Right ventricle myocardium inferior (tissue), 1 donor: ENCODE measurements at regions of chr4 and their contacts with region 1.

Region 1: DNA sequence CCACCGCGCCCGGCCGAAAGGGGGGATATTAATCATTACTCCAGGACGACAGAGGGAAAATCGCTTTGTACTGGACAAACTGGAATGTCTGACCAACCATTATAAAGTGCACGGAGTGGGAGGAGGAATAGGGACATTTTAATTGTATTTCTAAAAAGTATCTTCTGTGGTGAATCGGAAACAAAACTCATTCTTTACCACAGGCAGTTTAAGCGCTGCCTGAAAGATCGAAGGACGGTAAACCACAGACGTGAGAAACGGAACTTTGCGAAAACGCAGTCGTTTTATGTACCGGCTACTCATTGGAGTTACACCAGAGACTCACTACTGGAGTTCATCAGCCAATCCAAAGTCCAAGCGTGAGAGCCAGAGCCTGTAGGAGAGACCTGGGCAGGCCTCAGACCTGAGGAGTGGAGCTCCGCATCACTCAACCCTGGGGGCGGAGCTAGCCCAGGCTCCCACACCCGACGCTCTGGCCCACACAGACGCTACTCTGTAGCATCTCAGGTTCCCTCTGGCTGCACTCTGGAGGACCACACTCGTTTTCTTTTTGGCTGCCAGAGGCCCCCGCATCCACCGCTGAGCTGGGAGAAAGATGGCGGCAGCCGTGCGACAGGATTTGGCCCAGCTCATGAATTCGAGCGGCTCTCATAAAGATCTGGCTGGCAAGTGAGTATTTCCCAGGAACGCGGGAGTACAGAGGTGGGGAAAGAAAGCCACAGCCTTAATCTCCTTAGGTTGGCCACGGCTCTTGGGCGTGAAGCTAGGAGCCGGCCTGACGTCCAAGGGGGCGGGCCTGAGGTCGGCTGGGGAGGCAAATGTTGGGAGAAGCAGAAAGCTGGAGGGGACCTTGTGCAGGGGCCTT is at the start of gene COPS4:
- DNase-seq: peak; percentile 97
- ATAC-seq: peak; percentile 100
- total RNA-seq, gene COPS4: 50.4 TPM

Region 2: GRCh38 chr4:82614843-82615449 is 419.9 kb before region 1 on chr4:
- intact Hi-C with region 1: no loop called
- DNase-seq: no peak
- ATAC-seq: no peak

Region 3: GRCh38 chr4:82900331-82901128 is 134.3 kb before region 1 on chr4 and contains the start of gene THAP9:
- intact Hi-C with region 1: loop called (anchors 2 kb)
- DNase-seq: peak; percentile 99
- ATAC-seq: peak; percentile 98
- total RNA-seq, gene THAP9: 5.5 TPM

Region 4: DNA sequence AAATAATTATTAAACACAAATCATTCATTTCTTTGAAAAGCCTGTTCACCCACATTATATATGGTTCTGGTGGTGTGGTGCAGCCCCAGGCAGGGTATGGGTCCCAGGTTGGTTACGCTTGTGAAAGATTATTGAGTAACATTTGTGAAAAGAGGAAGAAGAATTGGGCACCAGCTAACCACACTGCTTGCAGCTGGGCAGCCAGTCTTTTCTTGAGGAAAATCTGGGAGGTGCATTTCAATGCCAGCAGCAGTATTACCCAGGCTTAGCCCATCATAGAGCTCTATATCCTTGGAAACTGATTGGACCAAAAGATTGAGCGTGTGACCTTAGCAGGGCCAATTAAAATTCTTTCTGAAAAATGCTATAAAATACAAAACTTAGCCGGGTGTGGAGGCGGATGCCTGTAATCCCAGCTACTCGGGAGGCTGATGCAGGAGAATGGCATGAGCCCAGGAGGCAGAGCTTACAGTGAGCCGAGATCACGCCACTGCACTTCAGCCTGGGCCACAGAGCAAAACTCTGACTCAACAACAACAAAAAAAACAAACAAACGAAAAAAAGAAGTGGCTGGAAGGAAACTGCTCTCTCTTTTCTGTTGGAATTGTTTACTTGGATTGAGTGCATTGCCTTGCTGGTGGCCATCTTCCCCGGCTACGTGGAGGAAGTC is 89.4 kb after region 1 on chr4:
- intact Hi-C with region 1: no loop called
- DNase-seq: no peak
- ATAC-seq: peak; percentile 46